ENCODE measurements at regions of chr22 and their contacts with region 1.

Region 1: DNA sequence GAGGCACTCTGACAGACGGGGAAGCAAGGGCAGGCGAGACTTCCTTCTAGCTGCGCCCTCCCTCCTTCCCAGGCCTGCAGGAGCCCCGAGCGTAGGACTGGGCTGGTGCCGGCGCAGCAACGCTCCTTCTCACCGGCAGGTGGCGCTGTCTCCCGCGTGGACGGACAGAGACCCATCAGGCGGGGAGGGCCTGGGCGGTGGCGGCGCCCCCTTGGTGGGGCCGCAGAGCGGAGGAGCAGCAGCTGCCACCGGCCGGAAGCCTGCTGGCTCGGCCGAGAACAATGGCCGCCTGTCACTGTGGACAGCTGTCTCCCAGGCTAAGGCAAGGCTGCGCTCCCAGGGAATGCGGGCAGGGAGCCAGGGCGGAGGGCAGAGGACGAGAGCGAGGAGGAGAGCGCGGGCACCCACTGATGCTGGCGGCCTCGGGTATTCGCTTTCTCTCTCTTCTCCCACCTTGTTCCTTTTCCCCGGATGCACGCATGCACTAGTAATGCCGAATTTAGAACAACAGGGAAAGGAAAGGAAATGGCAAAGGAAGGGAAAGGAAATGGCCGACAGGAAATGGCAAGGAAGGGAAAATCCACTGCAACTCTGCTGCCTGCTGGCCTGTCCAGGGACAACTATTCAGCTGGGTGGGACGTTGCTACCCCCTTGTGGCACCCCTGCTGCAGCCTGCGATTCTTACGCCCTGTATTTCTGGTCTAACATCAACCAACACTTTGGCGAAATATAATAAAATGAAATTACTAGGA is 14.4 kb downstream of the PPM1F start:
- DNase-seq: peak; percentile 100
- ATAC-seq: peak; percentile 97
- H3K4me3 ChIP-seq: peak overlapping the region; percentile 45
- H3K27ac ChIP-seq: peak overlapping the region; percentile 85
- H3K4me1 ChIP-seq: peaks cover 12 to 52% of the 10 kb centered on the region in 2 experiments
- H3K27me3 ChIP-seq: no peaks in the 10 kb centered on the region
- CTCF ChIP-seq: peak in 2 of 3 experiments; percentile 100; a peak in 4 of 6 replicates
- EP300 ChIP-seq: peak; percentile 83
- POLR2A ChIP-seq: no peak
- RAD21 ChIP-seq: no peak

Region 2: GRCh38 chr22:21657361-21658032 is 280.8 kb before region 1 on chr22:
- CTCF ChIA-PET with region 1: interaction called, 7 read pairs
- POLR2A ChIA-PET with region 1: interaction called, 3 read pairs
- in situ Hi-C with region 1: no loop called
- intact Hi-C with region 1: loop called (anchors 1 kb)
- DNase-seq: peak; percentile 100
- ATAC-seq: peak; percentile 95
- H3K4me3 ChIP-seq: peak overlapping the region; percentile 47
- H3K27ac ChIP-seq: peak overlapping the region; percentile 47
- H3K4me1 ChIP-seq: peaks cover 21 to 42% of the 10 kb centered on the region in 2 experiments
- H3K27me3 ChIP-seq: no peaks in the 10 kb centered on the region
- CTCF ChIP-seq: peak in 2 of 3 experiments; percentile 79 to 89; a peak in 4 of 6 replicates
- EP300 ChIP-seq: peak; percentile 19; the same call in 1 of the 2 replicates
- POLR2A ChIP-seq: no peak
- RAD21 ChIP-seq: no peak

Region 3: DNA sequence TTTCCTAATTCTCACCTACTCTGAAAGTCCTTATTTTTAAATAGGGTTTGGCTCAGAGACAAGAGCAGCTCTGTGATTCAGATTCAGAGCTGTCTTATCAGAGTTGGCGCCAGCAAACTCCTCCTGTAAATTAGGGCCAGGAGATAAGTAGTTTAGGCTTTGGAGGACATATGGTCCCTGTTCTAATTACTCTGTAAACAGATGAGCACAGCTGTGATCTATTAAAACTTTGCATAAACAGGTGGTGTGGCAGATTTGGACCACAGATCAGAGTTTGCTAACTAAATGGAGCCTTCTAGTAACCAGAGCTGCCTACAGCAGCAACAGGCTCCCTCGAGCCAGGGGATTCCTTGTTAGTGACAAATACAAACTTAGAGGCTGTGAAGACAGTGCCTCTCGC is 230.6 kb before region 1 on chr22:
- CTCF ChIA-PET with region 1: interaction called, 609 read pairs
- POLR2A ChIA-PET with region 1: interaction called, 27 read pairs
- in situ Hi-C with region 1: no loop called
- intact Hi-C with region 1: no loop called
- DNase-seq: peak in 3 of 4 experiments; percentile 73 to 84 (median 79)
- ATAC-seq: peak; percentile 38
- H3K4me3 ChIP-seq: no peak overlapping the region
- H3K27ac ChIP-seq: no peak overlapping the region
- H3K4me1 ChIP-seq: peaks cover 6 to 17% of the 10 kb centered on the region in 2 experiments; a peak in 4 of 5 replicates
- H3K27me3 ChIP-seq: peaks cover 42 to 65% of the 10 kb centered on the region in 2 experiments
- CTCF ChIP-seq: 0 out of 6 replicates have a peak, but pooled peaks of 1 of the 3 experiments have one; percentile 5
- EP300 ChIP-seq: peak; percentile 74
- POLR2A ChIP-seq: no peak
- RAD21 ChIP-seq: no peak

Region 4: DNA sequence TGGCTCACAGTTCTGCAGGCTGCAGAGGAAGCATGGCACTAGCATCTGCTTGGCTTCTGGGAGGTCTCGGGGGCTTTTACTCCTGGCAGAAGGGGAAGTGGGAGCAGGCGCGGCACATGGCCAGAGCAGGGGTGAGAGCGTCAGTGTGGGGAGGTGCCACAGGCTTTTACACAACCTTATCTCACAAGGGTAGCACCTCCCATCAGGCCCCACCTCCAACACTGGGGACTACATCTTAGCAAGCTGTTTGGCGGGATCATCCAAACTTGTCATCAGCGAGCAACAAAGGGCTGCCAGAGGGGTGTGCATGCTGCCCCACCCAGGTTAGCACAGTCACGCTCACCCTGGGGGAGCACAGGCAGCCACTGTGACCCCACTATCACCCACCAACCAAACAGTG is 183.7 kb before region 1 on chr22:
- CTCF ChIA-PET with region 1: interaction called, 4 read pairs
- POLR2A ChIA-PET with region 1: interaction called, 6 read pairs
- in situ Hi-C with region 1: no loop called
- intact Hi-C with region 1: loop called (anchors 1 kb)
- DNase-seq: peak; percentile 100
- ATAC-seq: peak; percentile 93
- H3K4me3 ChIP-seq: peak overlapping the region; percentile 4; the same call in 1 of the 2 replicates
- H3K27ac ChIP-seq: peak overlapping the region; percentile 70
- H3K4me1 ChIP-seq: peaks cover 43% of the 10 kb centered on the region in 2 experiments
- H3K27me3 ChIP-seq: no peaks in the 10 kb centered on the region
- CTCF ChIP-seq: no peak
- EP300 ChIP-seq: no peak
- POLR2A ChIP-seq: no peak
- RAD21 ChIP-seq: no peak

Region 5: DNA sequence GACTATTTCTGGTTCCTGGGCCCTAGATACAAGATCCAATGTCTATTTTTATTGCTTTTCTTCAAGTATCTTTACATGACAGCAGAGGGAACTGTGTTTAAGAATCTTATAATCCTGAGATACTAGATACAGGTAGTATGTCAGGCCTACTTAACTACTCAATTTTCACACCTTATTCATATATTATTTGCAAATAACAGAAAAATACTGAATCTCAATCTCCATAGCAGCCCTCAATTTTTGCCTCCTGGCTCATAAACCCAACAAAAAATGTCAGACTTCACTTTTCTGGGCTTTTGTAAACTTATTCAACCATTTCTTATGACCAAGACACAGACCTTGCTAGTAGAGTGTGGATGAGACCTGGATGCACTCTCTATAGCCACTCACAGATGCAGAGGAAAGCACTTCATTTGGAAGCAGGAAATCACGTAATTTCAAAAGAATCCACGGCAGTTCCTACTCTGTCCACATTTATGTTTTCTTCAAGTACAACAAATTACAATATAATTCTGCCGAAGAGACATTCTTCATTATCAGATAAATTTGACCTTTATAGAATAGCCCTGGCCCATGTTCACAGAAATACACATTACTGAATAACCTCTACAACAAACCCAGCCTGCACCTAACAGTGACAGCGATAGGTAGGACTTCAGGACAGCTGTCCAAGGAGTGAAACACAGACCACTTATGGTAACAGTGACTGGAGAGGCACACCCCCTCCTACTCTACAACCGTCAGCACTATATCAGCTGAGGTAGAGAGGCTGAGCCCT is 140.6 kb before region 1 on chr22:
- CTCF ChIA-PET with region 1: no interaction called
- POLR2A ChIA-PET with region 1: no interaction called
- in situ Hi-C with region 1: no loop called
- intact Hi-C with region 1: no loop called
- DNase-seq: peak in 1 of 4 experiments; percentile 52
- ATAC-seq: peak; percentile 10; the same call in 2 of the 3 replicates
- H3K4me3 ChIP-seq: no peak overlapping the region
- H3K27ac ChIP-seq: no peak overlapping the region
- H3K4me1 ChIP-seq: no peaks in the 10 kb centered on the region; a peak in 1 of 5 replicates
- H3K27me3 ChIP-seq: no peaks in the 10 kb centered on the region
- CTCF ChIP-seq: no peak
- EP300 ChIP-seq: no peak
- POLR2A ChIP-seq: no peak
- RAD21 ChIP-seq: no peak

Region 6: DNA sequence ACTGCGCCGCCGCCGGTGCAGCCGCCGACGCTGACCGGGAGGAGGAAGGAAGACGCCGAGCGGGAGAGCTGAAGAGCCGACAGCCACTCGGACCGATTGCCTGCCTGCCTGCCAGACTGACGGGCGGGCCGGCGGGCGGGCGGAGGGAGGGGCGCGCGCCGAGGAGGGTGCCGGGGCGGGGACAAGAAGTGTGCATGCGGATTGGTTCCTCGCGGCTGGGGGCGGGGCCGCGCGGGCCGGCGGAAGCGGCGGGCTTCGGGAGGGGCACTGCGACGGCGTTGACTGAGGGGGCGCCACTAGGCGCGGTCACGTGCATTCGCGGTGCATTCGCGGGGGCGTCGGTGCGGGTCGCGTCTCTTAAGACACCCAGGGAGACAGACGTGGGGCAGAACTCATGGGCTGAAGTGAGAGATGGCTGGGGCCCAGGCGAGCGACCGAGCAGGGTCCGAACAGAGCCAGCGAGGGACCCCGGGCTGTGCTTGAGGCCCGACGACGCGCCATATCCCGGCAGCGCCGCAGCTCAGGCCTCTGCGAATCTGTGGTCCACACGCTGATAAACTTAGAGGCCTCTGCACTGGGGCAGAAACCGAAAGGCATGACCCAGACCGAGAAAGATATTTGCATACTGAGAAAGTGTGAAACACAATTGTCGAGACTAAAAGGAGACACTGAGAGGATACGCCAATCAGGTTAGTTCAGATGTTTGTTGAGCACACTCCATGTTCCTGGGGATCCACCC is 70.5 kb before region 1 on chr22 and contains the start of gene MAPK1:
- CTCF ChIA-PET with region 1: interaction called, 11 read pairs
- POLR2A ChIA-PET with region 1: interaction called, 4 read pairs
- in situ Hi-C with region 1: no loop called
- intact Hi-C with region 1: loop called (anchors 1 kb)
- DNase-seq: peak; percentile 100
- ATAC-seq: peak; percentile 92
- H3K4me3 ChIP-seq: peak within 1 kb of the TSS; percentile 55
- H3K27ac ChIP-seq: peak within 1 kb of the TSS; percentile 81
- H3K4me1 ChIP-seq: peaks cover 52 to 57% of the 10 kb centered on the region in 2 experiments
- H3K27me3 ChIP-seq: no peaks in the 10 kb centered on the region
- CTCF ChIP-seq: no peak
- EP300 ChIP-seq: no peak
- POLR2A ChIP-seq: no peak
- RAD21 ChIP-seq: no peak
- polyA plus RNA-seq, gene MAPK1: 46.3 to 51.4 TPM

Region 7: GRCh38 chr22:21982338-21982965 is 44.2 kb after region 1 on chr22 and contains the start of gene TOP3B:
- CTCF ChIA-PET with region 1: interaction called, 4 read pairs
- POLR2A ChIA-PET with region 1: interaction called, 5 read pairs
- in situ Hi-C with region 1: no loop called
- intact Hi-C with region 1: loop called (anchors 5 kb)
- DNase-seq: peak; percentile 99 to 100 (median 100)
- ATAC-seq: peak; percentile 84
- H3K4me3 ChIP-seq: peak within 1 kb of the TSS; percentile 63
- H3K27ac ChIP-seq: peak within 1 kb of the TSS; percentile 70
- H3K4me1 ChIP-seq: peaks cover 13 to 26% of the 10 kb centered on the region in 2 experiments; a peak in 4 of 5 replicates
- H3K27me3 ChIP-seq: no peaks in the 10 kb centered on the region; a peak in 1 of 5 replicates
- CTCF ChIP-seq: peak in 1 of 3 experiments; percentile 30; a peak in 1 of 6 replicates
- EP300 ChIP-seq: peak; percentile 93
- POLR2A ChIP-seq: no peak
- RAD21 ChIP-seq: no peak
- polyA plus RNA-seq, gene TOP3B: 3.0 to 11.5 TPM

Region 8: GRCh38 chr22:22118987-22119386 is 180.7 kb after region 1 on chr22:
- CTCF ChIA-PET with region 1: no interaction called
- POLR2A ChIA-PET with region 1: no interaction called
- in situ Hi-C with region 1: no loop called
- intact Hi-C with region 1: no loop called
- DNase-seq: peak in 1 of 4 experiments; percentile 30
- ATAC-seq: peak; percentile 11
- H3K4me3 ChIP-seq: no peak overlapping the region
- H3K27ac ChIP-seq: no peak overlapping the region
- H3K4me1 ChIP-seq: peaks cover 0 to 10% of the 10 kb centered on the region in 2 experiments; a peak in 1 of 5 replicates
- H3K27me3 ChIP-seq: peaks cover 15 to 19% of the 10 kb centered on the region in 2 experiments
- CTCF ChIP-seq: no peak
- EP300 ChIP-seq: no peak
- POLR2A ChIP-seq: no peak
- RAD21 ChIP-seq: no peak

Region 9: DNA sequence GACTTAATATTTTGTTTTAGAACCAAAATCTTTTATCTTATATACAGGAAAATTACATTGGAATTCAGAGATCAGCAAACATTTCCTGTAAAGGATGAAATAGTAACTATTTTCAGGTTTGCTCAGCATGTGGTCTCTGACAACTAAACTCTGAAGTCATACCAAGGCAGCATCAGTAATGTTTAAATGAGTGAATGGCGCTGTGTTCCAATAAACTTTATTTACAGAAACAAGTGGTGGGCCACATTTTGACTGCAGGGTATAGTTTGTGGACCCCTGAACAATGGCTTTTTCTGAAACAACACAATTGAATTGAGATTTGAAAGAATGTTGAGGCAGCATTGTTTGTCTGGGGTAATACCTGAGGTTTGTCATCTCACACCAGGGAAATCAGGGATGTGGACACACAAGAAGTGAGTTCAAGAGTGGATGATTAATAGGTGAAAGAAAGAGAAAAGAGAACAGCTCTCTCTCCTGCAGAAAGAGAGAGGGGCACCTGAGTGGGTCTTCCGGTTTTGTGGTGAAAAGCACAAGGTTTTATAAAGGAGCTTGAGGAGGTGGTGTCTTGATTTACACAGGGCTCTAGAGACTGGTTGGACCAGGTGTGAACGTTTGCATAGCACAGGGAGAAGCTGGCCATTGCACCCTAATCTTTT is 192.8 kb after region 1 on chr22:
- CTCF ChIA-PET with region 1: no interaction called
- POLR2A ChIA-PET with region 1: no interaction called
- in situ Hi-C with region 1: no loop called
- intact Hi-C with region 1: no loop called
- DNase-seq: no peak
- ATAC-seq: peak; percentile 27; the same call in 2 of the 3 replicates
- H3K4me3 ChIP-seq: no peak overlapping the region
- H3K27ac ChIP-seq: no peak overlapping the region
- H3K4me1 ChIP-seq: peaks cover 0 to 2% of the 10 kb centered on the region in 2 experiments; a peak in 2 of 5 replicates
- H3K27me3 ChIP-seq: peaks cover 14 to 53% of the 10 kb centered on the region in 2 experiments
- CTCF ChIP-seq: no peak
- EP300 ChIP-seq: no peak
- POLR2A ChIP-seq: no peak
- RAD21 ChIP-seq: no peak

Measured in K562 (cell line).